Activated naive CD8-positive, alpha-beta T cell treated with anti-CD3 and anti-CD28 coated beads, Interleukin-2, amount 10 ng/mL, durations not matched to agents 7 days and 5 days (primary cell): ENCODE measurements at regions of chr7 and their contacts with region 1.

Region 1: DNA sequence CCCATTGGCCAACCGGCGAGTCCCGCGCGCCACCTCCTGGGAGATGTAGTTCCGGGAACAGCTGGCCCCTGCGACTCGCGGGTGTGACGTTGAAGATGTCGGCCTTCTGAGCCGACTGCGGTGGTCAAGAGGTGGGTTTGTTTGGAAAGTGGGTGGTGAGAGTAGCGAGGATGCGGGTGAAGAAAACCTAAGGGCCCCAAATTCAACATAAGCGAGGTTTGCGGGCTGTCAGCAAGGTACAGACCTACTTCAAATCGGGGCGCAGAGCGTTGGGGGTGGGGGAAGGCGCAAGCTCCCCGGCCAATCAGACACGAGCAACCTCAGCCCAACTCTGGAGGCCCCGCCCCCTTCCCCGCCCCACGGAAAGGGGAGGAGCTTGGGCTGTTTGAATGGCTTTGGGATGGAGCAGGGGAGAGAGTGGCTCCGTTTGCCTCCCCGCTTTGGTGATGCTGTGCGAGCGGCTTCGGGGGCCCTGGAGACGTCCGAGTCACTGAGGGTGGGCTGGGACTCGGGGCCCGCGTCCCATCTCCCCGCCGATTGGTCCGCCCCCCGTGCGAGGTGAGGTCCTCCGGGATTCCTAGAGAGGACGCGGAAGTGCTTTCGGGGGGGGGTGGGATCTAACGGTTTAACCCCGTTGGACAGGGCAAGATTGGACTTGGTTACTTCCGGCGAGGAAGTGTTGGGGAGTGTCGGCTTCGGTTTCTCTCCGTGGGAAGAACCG is at the start of gene ZKSCAN5:
- DNase-seq: peak; percentile 96
- ATAC-seq: peak; percentile 78
- H3K4me3 Mint-ChIP-seq: peak within 1 kb of the TSS; percentile 99
- H3K27ac Mint-ChIP-seq: peak within 1 kb of the TSS; percentile 99
- H3K4me1 Mint-ChIP-seq: peaks cover 21% of the 10 kb centered on the region
- H3K27me3 Mint-ChIP-seq: no peaks in the 10 kb centered on the region
- total RNA-seq, gene ZKSCAN5: 12.7 to 13.5 TPM

Region 2: DNA sequence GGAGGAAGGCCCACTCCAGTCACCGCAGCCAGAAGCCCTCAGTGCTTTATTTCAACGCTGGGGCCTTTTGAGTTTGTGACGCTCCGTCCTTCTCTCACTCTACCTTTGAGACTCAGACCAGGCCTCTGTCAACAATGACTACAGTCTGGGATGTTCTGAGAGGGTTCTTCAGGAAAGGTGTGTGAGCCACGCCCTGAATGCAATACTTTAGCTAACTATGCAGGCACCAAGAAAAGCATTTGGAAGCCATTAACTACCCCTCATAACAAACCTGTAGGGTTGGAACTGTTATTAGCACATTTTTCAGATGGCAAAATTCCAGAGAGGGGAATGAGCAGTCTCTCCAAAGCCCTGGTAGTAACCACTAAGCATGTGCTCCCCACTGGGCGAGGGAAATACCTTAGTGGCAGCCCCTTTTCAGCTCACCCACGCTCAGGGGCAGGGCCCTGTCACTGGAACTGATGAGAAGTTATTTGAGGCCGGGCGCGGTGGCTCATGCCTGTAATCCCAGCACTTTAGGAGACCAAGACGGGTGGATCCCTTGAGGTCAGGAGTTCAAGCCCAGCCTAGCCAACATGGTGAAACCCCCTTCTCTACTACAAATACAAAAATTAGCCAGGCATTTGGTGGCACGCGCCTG is 135.9 kb before region 1 on chr7:
- POLR2A ChIA-PET with region 1: no interaction called
- DNase-seq: no peak
- ATAC-seq: no peak
- H3K4me3 Mint-ChIP-seq: peak overlapping the region; percentile 22
- H3K27ac Mint-ChIP-seq: no peak overlapping the region
- H3K4me1 Mint-ChIP-seq: peaks cover 25% of the 10 kb centered on the region
- H3K27me3 Mint-ChIP-seq: peaks cover 2% of the 10 kb centered on the region

Region 3: GRCh38 chr7:99438573-99439480 is 65.9 kb before region 1 on chr7 and contains the starts of genes CPSF4 and PTCD1:
- POLR2A ChIA-PET with region 1: interaction called, 10 read pairs
- DNase-seq: peak; percentile 92
- ATAC-seq: peak; percentile 91
- H3K4me3 Mint-ChIP-seq: peak within 1 kb of the TSS; percentile 100
- H3K27ac Mint-ChIP-seq: peak within 1 kb of the TSS; percentile 98
- H3K4me1 Mint-ChIP-seq: peaks cover 27% of the 10 kb centered on the region
- H3K27me3 Mint-ChIP-seq: no peaks in the 10 kb centered on the region
- total RNA-seq, gene CPSF4: 61.5 to 62.1 TPM
- total RNA-seq, gene PTCD1: 10.7 to 11.1 TPM

Region 4: DNA sequence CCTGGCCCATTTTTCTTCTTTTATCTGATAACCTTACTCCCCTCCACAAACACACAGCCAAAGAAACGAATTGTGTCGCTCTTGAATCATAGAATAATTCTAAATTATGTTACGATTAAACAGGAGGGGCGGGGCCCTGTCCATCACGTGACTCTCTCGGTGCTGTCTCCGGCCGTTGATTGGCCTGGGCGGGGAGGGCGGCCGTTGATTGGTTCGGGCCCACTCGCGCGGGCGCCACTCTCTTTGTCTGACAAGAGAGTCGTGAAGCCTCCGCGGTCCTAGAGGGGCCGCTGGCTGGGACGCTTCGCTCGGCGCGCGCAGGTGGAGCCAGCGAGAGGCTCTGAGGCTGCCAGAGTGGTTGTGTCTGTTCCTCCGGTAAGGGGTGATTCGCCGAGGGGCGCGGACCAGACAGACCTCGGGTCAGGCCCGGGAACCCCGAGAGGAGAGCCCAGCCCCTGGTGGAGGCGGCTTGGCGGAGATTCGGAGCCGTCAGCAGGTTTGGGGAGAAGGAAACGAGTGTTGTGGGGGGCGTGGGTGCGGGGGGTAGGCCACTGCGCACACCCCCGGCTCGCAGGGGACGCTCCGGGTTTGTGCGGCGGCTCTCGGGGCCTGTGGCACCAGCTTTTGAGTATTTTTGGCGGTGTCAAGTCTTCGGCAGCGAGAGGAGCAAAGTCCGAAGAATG is 32.1 kb before region 1 on chr7 and contains the start of gene ZNF789:
- POLR2A ChIA-PET with region 1: interaction called, 50 read pairs
- DNase-seq: peak; percentile 95
- ATAC-seq: peak; percentile 99
- H3K4me3 Mint-ChIP-seq: peak within 1 kb of the TSS; percentile 95
- H3K27ac Mint-ChIP-seq: peak within 1 kb of the TSS; percentile 92
- H3K4me1 Mint-ChIP-seq: peaks cover 21% of the 10 kb centered on the region
- H3K27me3 Mint-ChIP-seq: peaks cover 2% of the 10 kb centered on the region
- total RNA-seq, gene ZNF789: 26.0 to 26.4 TPM

Region 5: DNA sequence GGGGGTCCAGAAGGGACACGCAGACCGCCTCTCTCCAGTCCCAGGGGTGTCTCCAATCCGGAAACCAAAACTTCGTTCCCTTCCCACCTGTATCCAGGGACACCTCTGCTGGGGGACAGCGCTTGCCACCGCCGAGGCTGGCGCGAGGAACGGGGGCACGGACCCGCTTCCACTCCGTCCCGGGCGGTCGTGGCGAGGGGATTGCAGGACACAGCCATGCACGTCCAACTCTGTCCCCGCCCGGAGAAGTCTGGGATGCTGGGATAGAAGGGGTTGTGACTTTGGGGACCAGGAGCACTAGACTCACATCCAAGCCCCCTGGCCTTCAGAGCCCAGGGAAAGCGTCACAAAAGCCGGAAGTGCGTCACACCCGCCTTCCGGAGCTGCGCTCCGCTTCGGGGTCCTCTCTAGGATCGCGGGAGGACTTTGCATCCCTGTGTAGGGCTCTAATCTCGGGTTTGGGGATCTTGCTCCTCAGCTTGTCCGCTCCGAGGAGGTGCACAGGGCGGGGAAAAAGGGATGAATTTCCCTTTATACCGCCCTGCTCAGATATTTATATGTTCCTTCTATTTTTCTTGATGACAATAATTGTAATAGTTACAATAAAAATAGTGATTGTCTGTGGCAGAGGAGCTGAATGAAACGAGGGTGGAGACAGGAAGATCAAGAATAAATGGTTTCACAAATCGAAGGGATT is 47.2 kb after region 1 on chr7 and contains the start of gene FAM200A:
- POLR2A ChIA-PET with region 1: interaction called, 40 read pairs
- DNase-seq: peak; percentile 83
- ATAC-seq: peak; percentile 98
- H3K4me3 Mint-ChIP-seq: peak within 1 kb of the TSS; percentile 85
- H3K27ac Mint-ChIP-seq: peak within 1 kb of the TSS; percentile 49
- H3K4me1 Mint-ChIP-seq: peaks cover 22% of the 10 kb centered on the region
- H3K27me3 Mint-ChIP-seq: no peaks in the 10 kb centered on the region
- total RNA-seq, gene FAM200A: 6.9 to 7.3 TPM

Region 6: GRCh38 chr7:99558306-99559174 is 53.8 kb after region 1 on chr7 and contains the start of gene ZNF655:
- POLR2A ChIA-PET with region 1: interaction called, 40 read pairs
- DNase-seq: peak; percentile 93
- ATAC-seq: peak; percentile 86
- H3K4me3 Mint-ChIP-seq: peak within 1 kb of the TSS; percentile 100
- H3K27ac Mint-ChIP-seq: peak within 1 kb of the TSS; percentile 100
- H3K4me1 Mint-ChIP-seq: peaks cover 39% of the 10 kb centered on the region
- H3K27me3 Mint-ChIP-seq: no peaks in the 10 kb centered on the region
- total RNA-seq, gene ZNF655: 133 to 134 TPM

Region 7: GRCh38 chr7:99616359-99617191 is 111.8 kb after region 1 on chr7 and contains the start of gene ZSCAN25:
- POLR2A ChIA-PET with region 1: interaction called, 10 read pairs
- DNase-seq: peak; percentile 84
- ATAC-seq: peak; percentile 93
- H3K4me3 Mint-ChIP-seq: peak within 1 kb of the TSS; percentile 93
- H3K27ac Mint-ChIP-seq: peak within 1 kb of the TSS; percentile 97
- H3K4me1 Mint-ChIP-seq: peaks cover 39% of the 10 kb centered on the region
- H3K27me3 Mint-ChIP-seq: no peaks in the 10 kb centered on the region
- total RNA-seq, gene ZSCAN25: 35.5 to 42.5 TPM

Region 8: DNA sequence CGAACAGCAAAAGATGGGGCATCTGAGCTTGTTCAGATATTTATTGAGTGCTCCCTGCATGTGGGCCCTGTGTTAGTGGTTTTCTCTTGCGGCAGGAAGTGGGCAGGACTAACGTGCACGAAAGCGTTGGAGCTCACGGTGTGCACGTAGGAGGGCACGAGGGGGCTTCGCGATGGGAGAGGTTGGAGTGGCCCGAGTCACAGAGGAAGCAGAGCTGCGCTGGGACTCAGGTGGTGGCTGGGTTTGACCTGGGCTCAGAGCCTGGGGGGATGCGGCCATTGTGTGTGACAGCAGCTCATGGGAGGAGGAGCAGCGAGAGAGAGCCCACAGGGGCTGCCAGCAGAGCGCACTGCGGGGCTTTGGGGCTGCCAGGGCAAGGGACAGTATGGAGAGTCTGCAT is 119.7 kb after region 1 on chr7:
- POLR2A ChIA-PET with region 1: interaction called, 12 read pairs
- DNase-seq: peak; percentile 82
- ATAC-seq: peak; percentile 91
- H3K4me3 Mint-ChIP-seq: peak overlapping the region; percentile 86
- H3K27ac Mint-ChIP-seq: peak overlapping the region; percentile 99
- H3K4me1 Mint-ChIP-seq: peaks cover 51% of the 10 kb centered on the region
- H3K27me3 Mint-ChIP-seq: no peaks in the 10 kb centered on the region